Breast epithelium (tissue), 4 donors: ENCODE measurements at regions of chr20 and their contacts with region 1.

Region 1: DNA sequence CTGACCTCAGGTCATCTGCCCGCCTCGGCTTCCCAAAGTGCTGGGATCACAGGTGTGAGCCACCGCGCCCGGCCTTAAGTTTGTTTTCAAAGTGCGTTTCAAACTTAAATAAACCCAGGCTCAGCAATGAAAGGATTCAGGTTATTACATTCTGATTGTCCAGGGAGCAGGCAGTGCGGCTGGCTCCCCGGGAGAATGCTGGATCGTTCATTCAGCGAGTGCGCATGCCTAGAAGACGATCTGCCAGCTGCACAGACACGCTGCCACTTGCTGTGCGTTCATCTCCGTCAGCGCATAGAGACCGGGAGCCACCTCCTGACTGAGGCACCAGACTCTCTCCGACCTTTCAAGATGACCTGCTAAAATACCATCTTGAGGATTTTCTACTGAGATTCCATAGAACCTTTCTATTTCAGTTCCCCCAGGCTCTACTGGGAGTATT is 163.9 kb upstream of the ZNF217 start:
- DNase-seq: peak in 1 of 2 donors; percentile 57
- H3K4me3 ChIP-seq: no peak overlapping the region
- H3K27ac ChIP-seq: no peak overlapping the region
- H3K4me1 ChIP-seq: peaks cover 0 to 4% of the 10 kb centered on the region in 2 donors
- H3K27me3 ChIP-seq: no peaks in the 10 kb centered on the region
- CTCF ChIP-seq: no peak
- POLR2A ChIP-seq: no peak

Region 2: DNA sequence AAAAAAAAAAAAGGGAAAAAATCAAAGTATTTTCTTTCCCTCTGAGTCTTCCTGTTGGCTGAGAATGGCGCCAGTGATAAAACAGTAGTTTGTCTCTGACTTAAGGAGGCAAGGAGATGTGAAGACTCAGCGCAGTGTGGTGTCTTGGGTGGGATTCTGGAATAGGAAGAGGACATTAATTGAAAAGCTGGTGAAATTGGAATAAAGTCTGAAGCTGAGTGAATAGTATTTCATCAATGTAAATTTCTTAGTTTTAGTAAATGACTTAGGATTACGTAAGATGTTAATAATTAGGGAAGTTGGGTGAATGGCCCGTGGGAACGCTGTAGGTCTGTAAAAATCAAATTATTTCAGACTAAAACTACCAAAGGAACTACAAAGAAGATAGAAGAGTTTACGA is 41.1 kb before region 1 on chr20:
- intact Hi-C with region 1: loop called (anchors 2 kb)
- DNase-seq: no peak
- H3K4me3 ChIP-seq: no peak overlapping the region
- H3K27ac ChIP-seq: no peak overlapping the region
- H3K4me1 ChIP-seq: no peaks in the 10 kb centered on the region
- H3K27me3 ChIP-seq: no peaks in the 10 kb centered on the region
- CTCF ChIP-seq: no peak
- POLR2A ChIP-seq: no peak

Region 3: DNA sequence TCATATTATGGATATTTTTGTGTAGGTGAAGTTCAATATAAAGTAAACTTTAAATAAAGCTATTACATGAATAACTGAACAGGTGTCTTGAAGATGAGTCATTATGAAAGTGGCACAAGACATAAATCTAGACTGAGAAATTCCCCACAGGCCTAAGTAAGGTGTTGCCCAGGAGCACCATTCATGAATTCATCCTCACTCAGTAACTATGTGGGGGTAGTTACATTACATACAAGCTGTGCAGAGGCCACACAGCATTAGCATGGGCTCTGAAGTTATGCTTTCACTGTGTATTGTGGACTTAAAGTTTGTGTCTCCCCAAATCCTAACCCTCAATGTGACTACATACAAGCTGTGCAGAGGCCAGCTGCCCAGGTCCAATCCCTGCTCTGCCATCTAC is 247.0 kb after region 1 on chr20:
- intact Hi-C with region 1: no loop called
- DNase-seq: no peak
- H3K4me3 ChIP-seq: no peak overlapping the region
- H3K27ac ChIP-seq: no peak overlapping the region
- H3K4me1 ChIP-seq: no peaks in the 10 kb centered on the region
- H3K27me3 ChIP-seq: no peaks in the 10 kb centered on the region
- CTCF ChIP-seq: no peak
- POLR2A ChIP-seq: no peak